ENCODE measurements at regions of chr4 and their contacts with region 1.

Region 1: GRCh38 chr4:139651282-139652194 is 14.1 kb upstream of the MGST2 start:
- DNase-seq: no peak
- H3K4me3 ChIP-seq: no peak overlapping the region
- H3K27me3 ChIP-seq: no peaks in the 10 kb centered on the region
- CTCF ChIP-seq: peak; percentile 90

Region 2: GRCh38 chr4:139092271-139092670 is 559.3 kb before region 1 on chr4:
- CTCF ChIA-PET with region 1: no interaction called
- POLR2A ChIA-PET with region 1: no interaction called
- DNase-seq: no peak
- H3K4me3 ChIP-seq: no peak overlapping the region
- H3K27me3 ChIP-seq: no peaks in the 10 kb centered on the region
- CTCF ChIP-seq: no peak

Region 3: GRCh38 chr4:139392797-139393196 is 258.7 kb before region 1 on chr4:
- CTCF ChIA-PET with region 1: no interaction called
- POLR2A ChIA-PET with region 1: no interaction called
- DNase-seq: no peak
- H3K4me3 ChIP-seq: no peak overlapping the region
- H3K27me3 ChIP-seq: no peaks in the 10 kb centered on the region
- CTCF ChIP-seq: no peak

Region 4: DNA sequence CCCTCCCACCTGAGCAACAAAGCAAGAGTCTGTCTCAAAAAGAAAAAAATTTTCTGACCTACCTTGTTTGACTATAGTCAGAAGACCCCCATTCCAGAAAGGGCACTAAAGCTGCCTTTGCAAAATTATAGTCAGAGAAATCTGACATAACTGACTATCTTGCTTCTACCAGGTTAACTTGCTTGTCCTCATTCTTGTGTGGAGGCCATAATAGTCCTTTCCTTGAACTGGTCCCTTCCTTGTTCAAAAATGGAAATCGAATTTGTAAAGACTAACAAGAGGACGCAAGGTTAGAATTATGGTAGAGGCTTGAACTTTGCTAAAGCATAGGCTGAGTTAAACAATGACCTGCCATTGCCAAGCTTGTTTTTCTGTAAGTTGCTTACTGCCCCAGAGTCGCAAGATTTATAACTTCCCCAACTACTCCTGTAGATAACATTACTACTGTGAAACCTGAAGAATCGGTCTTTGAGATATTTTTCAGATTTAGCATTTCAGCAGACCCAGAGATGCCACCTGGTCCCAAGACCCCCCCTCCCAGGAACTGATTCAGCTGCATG is 152.4 kb before region 1 on chr4:
- CTCF ChIA-PET with region 1: interaction called, 23 read pairs
- POLR2A ChIA-PET with region 1: no interaction called
- DNase-seq: no peak
- H3K4me3 ChIP-seq: no peak overlapping the region
- H3K27me3 ChIP-seq: no peaks in the 10 kb centered on the region
- CTCF ChIP-seq: no peak

Region 5: GRCh38 chr4:139619644-139620043 is 31.9 kb before region 1 on chr4:
- CTCF ChIA-PET with region 1: interaction called, 38 read pairs
- POLR2A ChIA-PET with region 1: no interaction called
- DNase-seq: no peak
- H3K4me3 ChIP-seq: no peak overlapping the region
- H3K27me3 ChIP-seq: no peaks in the 10 kb centered on the region; the same call in 1 of the 2 replicates
- CTCF ChIP-seq: peak; percentile 57

Region 6: GRCh38 chr4:139665690-139666529 is 14.4 kb after region 1 on chr4 and contains the start of gene MGST2:
- CTCF ChIA-PET with region 1: interaction called, 19 read pairs
- POLR2A ChIA-PET with region 1: no interaction called
- DNase-seq: no peak
- H3K4me3 ChIP-seq: peak within 1 kb of the TSS; percentile 44
- H3K27me3 ChIP-seq: no peaks in the 10 kb centered on the region
- CTCF ChIP-seq: no peak
- polyA plus RNA-seq, gene MGST2: 10.0 and 17.5 TPM in 2 replicates

Region 7: DNA sequence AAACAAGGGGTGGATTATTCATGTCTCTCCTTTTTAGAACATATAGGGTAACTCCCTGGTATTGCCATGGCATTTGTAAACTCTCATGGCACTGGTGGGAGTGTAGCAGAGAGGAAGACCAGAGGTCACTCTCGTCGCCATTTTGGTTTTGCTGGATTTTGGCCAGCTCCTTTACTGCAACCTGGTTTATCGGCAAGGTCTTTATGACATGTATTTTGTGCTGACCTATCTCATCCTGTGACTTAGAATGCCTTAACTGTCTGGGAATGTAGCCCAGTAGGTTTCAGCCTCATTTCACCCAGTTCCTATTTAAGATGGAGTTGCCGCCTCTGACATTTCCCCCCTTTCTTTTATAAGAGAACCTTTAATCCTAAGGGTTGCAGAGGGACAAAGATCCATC is 59.9 kb after region 1 on chr4:
- CTCF ChIA-PET with region 1: no interaction called
- POLR2A ChIA-PET with region 1: no interaction called
- DNase-seq: no peak
- H3K4me3 ChIP-seq: no peak overlapping the region
- H3K27me3 ChIP-seq: no peaks in the 10 kb centered on the region
- CTCF ChIP-seq: no peak